Breast epithelium (tissue), 4 donors: ENCODE measurements at regions of chr10 and their contacts with region 1.

Region 1: DNA sequence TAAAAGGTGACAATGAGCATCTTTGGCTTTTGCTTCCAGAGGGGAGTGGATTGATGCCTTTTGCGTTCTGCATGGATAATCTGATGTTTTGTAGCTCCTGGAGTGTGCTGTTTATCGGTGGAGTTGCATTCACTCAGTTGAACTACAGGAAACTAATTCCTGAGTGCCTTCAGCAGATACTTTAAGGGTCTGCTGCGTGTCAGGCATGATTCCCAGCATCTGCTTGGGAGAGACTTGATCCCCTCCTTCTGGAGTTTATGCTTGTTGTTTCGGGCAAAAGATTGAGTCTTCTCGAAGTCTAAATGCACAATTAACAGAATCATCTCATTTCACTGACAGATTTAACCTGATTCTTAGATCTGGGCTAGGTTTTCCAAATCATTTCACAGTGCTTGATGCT is 46.2 kb downstream of the CELF2 start:
- DNase-seq: no peak
- H3K4me3 ChIP-seq: no peak overlapping the region
- H3K27ac ChIP-seq: no peak overlapping the region
- H3K4me1 ChIP-seq: no peaks in the 10 kb centered on the region
- H3K27me3 ChIP-seq: no peaks in the 10 kb centered on the region
- CTCF ChIP-seq: no peak
- POLR2A ChIP-seq: no peak

Region 2: DNA sequence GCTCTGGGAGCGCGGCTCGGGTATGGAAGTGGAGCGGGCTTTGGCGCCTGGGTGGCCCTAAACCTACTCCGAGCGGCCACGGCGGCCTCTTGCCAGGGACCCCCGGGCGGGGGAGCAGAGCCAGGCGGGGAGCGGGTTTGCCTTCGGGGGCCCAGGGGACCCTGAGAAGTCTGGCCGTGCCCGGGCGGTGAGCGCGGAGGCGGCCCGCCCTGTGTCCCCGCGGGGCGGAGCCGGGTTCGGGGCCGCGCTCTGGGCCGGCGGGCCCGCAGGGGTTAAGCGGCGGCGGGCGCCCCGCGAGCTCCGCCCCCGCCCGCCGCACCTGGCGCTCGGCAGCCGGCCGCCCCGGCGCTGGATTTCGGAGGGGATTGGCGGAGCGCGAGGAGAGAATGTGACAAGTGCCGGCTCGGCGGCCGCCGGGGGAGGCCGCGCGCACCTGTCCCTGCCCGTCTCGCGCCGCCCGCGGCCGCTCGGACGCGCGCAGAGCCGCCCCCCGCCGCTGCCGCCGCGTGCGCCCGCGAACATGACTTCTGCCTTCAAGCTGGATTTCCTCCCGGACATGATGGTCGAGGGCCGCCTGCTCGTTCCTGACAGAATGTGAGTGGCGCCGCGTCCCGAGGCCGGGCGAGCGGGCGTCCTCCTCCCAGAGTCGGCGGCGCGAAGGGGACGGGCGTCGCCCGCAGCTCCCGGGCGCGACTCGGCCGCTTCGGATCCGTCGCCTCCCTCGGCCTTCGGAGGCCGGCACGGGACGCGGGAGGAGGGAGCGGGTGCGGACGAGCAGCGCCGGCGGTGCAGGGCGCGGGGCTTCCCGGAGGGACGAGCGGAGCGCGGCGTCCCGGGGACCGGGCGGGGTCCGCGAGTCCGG is 46.1 kb before region 1 on chr10 and contains the start of gene CELF2:
- intact Hi-C with region 1: loop called (anchors 2 kb)
- DNase-seq: peak in 1 of 2 donors; percentile 23
- H3K4me3 ChIP-seq: peak within 1 kb of the TSS; percentile 71 to 92 (median 85)
- H3K27ac ChIP-seq: peak within 1 kb of the TSS; percentile 83 to 89
- H3K4me1 ChIP-seq: no peaks in the 10 kb centered on the region
- H3K27me3 ChIP-seq: no peaks in the 10 kb centered on the region
- CTCF ChIP-seq: no peak
- POLR2A ChIP-seq: no peak
- total RNA-seq, gene CELF2: 40.0 to 178 (median 45.6) TPM